ENCODE measurements at regions of chr11 and their contacts with region 1.

Region 1: GRCh38 chr11:94845622-94846021 is 77.5 kb downstream of the AMOTL1 start:
- DNase-seq: no peak
- ATAC-seq: peak; percentile 68
- H3K4me3 ChIP-seq: no peak overlapping the region
- H3K27ac ChIP-seq: no peak overlapping the region
- H3K4me1 ChIP-seq: peaks cover 8 to 20% of the 10 kb centered on the region in 2 donors
- H3K27me3 ChIP-seq: no peaks in the 10 kb centered on the region

Region 2: GRCh38 chr11:94786264-94787126 is 59.1 kb before region 1 on chr11:
- intact Hi-C with region 1: loop called in 1 of 2 experiments (anchors 10 kb)
- DNase-seq: no peak
- ATAC-seq: no peak
- H3K4me3 ChIP-seq: no peak overlapping the region
- H3K27ac ChIP-seq: no peak overlapping the region
- H3K4me1 ChIP-seq: peaks cover 3 to 16% of the 10 kb centered on the region in 2 donors
- H3K27me3 ChIP-seq: no peaks in the 10 kb centered on the region

Region 3: GRCh38 chr11:94794287-94795168 is 51.1 kb before region 1 on chr11:
- intact Hi-C with region 1: loop called (anchors 5 to 10 kb)
- DNase-seq: peak; percentile 76 to 77
- ATAC-seq: peak; percentile 75
- H3K4me3 ChIP-seq: no peak overlapping the region
- H3K27ac ChIP-seq: peak overlapping the region; percentile 36 to 87
- H3K4me1 ChIP-seq: peaks cover 1 to 24% of the 10 kb centered on the region in 2 donors
- H3K27me3 ChIP-seq: no peaks in the 10 kb centered on the region

Measured in aorta (tissue), 5 donors.